A673 (cell line): ENCODE measurements at regions of chr15 and their contacts with region 1.

Region 1: GRCh38 chr15:55407949-55408791 is at the starts of genes CCPG1 and PIERCE2:
- DNase-seq: peak; percentile 95
- H3K4me3 ChIP-seq: peak within 1 kb of the TSS; percentile 82
- H3K27ac ChIP-seq: peak within 1 kb of the TSS; percentile 69
- H3K4me1 ChIP-seq: peaks cover 14% of the 10 kb centered on the region
- H3K27me3 ChIP-seq: no peaks in the 10 kb centered on the region
- CTCF ChIP-seq: peak; percentile 67
- total RNA-seq, gene CCPG1: 27.5 and 31.9 TPM in 2 replicates
- total RNA-seq, gene PIERCE2: 0.86 and 1.7 TPM in 2 replicates

Region 2: DNA sequence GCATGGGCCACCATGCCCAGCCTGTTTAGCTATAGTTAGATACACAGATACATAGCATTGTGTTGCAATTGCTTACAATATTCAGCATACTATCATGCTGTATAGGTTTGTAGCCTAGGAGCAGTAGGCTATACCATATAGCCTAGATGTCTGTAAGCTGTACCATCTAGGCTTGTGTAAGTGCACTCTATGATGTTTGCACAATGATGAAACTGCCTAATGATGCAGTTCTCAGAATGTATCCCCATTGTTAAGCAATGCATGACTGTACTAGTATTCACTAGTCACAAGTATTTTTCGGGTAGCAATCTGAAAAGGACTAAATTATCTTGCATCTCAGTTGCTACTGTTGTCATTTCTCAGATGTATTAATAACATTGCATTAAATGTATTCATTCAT is 73.2 kb before region 1 on chr15:
- CTCF ChIA-PET with region 1: no interaction called
- POLR2A ChIA-PET with region 1: no interaction called
- intact Hi-C with region 1: loop called (anchors 5 kb)
- DNase-seq: no peak
- H3K4me3 ChIP-seq: no peak overlapping the region
- H3K27ac ChIP-seq: no peak overlapping the region
- H3K4me1 ChIP-seq: no peaks in the 10 kb centered on the region
- H3K27me3 ChIP-seq: no peaks in the 10 kb centered on the region
- CTCF ChIP-seq: no peak

Region 3: GRCh38 chr15:55420171-55420866 is 12.1 kb after region 1 on chr15:
- CTCF ChIA-PET with region 1: no interaction called
- POLR2A ChIA-PET with region 1: interaction called, 14 read pairs
- intact Hi-C with region 1: no loop called
- DNase-seq: no peak
- H3K4me3 ChIP-seq: no peak overlapping the region
- H3K27ac ChIP-seq: no peak overlapping the region
- H3K4me1 ChIP-seq: no peaks in the 10 kb centered on the region
- H3K27me3 ChIP-seq: no peaks in the 10 kb centered on the region
- CTCF ChIP-seq: no peak